OCI-LY7 (cell line): ENCODE measurements at regions of chr16 and their contacts with region 1.

Region 1: DNA sequence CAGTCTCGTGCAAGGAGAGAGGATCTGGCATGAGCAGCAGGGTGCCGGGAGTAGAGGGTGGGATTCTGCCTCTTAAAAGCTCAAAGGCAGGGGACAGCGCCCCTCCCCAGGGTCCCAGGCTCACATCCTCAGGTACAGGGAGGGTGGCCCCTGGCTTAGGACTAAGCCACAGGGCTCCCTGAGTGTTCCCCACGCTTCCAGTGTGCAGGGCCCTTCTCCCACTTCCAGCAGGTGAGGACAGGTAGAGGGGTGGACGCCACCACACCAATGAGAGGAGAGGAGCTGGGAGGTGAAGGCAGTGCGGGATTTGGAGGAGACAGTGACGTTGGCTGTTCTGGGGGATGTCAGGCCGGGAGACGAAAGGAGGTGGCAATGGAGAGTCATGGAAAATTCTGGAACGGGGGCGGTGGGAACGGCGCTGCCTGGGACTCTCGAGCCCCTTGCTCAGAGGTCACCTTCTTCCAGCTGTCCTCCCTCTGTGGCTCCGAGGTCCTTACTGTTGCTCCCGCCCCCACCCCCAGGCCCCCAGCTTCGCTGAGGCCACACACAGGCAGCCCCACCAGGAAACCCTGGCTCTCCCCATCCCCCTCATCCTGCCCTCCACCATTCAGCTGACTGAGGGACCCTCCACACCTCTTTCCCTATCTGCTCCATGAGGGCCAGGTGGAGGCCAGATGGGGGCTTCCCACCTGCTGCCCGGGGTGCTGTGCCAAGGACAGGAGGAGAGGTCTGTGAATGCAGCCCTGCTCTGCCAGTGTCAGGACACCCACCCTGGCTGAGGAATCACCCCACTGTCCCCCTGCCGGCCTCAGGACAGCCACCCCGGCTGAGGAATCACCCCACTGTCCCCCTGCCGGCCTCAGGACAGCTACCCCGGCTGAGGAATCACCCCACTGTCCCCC is 57.7 kb upstream of the ACSF3 start:
- DNase-seq: no peak
- H3K4me3 ChIP-seq: no peak overlapping the region
- H3K27ac ChIP-seq: no peak overlapping the region
- H3K4me1 ChIP-seq: peaks cover 48% of the 10 kb centered on the region
- CTCF ChIP-seq: no peak

Region 2: GRCh38 chr16:88941913-88942909 is 93.7 kb before region 1 on chr16:
- CTCF ChIA-PET with region 1: interaction called, 10 read pairs
- POLR2A ChIA-PET with region 1: no interaction called
- intact Hi-C with region 1: no loop called
- DNase-seq: peak; percentile 84
- H3K4me3 ChIP-seq: peak overlapping the region; percentile 47
- H3K27ac ChIP-seq: peak overlapping the region; percentile 2
- H3K4me1 ChIP-seq: peaks cover 49% of the 10 kb centered on the region
- CTCF ChIP-seq: peak; percentile 63